Calu3 (cell line): ENCODE measurements at regions of chr3 and their contacts with region 1.

Region 1: DNA sequence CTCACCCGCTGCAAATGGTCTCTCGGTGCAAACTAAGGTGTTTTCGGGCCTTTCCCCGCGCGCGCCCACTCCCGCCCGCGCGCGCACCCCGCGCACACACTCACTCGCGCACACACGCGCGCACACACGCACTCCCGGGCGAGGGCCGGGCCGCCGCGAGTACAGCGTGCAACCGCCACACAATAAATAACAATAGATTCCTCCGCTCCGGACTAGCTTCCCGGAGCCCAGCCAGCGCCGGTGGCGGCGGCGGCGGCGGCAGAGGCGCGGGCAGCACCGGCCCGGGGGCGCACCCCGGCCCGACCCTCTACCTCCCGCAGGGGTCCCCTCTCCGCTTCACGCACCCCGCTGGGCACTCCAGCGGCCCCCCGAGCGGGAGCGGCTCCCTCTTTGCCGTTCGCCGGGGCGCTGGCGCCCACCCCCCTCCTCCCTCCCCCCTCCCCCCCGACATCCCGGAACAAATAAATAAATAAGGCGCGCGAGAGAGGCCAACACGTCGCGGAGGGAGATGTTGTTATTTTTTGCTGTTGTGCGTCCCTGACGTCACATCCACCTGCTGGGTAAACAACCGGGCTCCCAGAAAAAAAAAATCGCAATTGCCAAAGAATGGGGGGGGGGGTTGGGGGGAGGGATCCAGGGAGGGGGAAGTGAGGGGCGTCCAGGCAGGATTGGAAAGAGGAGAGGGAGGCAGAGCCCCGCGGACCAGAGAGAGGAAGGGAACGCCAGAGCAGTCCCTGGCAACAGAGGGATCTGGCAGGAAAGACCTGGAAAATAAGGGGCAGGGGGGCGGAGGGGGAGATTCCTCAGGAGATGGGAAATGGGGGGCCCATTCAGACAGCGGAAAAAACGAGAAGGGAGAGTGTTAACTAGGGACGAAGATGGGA is at the start of gene FOXP1:
- DNase-seq: peak; percentile 83
- H3K4me3 Mint-ChIP-seq: peak within 1 kb of the TSS; percentile 91
- H3K27ac Mint-ChIP-seq: peak within 1 kb of the TSS; percentile 97
- H3K4me1 Mint-ChIP-seq: no peaks in the 10 kb centered on the region
- H3K27me3 Mint-ChIP-seq: no peaks in the 10 kb centered on the region
- CTCF ChIP-seq: no peak
- total RNA-seq, gene FOXP1: 81.6 and 82.8 TPM in 2 replicates

Region 2: GRCh38 chr3:70531063-70531657 is 1052.6 kb before region 1 on chr3:
- CTCF ChIA-PET with region 1: no interaction called
- intact Hi-C with region 1: loop called (anchors 5 kb)
- DNase-seq: no peak
- H3K4me3 Mint-ChIP-seq: no peak overlapping the region
- H3K27ac Mint-ChIP-seq: no peak overlapping the region
- H3K4me1 Mint-ChIP-seq: no peaks in the 10 kb centered on the region
- H3K27me3 Mint-ChIP-seq: peaks cover 30% of the 10 kb centered on the region
- CTCF ChIP-seq: no peak

Region 3: GRCh38 chr3:70716832-70717231 is 867.0 kb before region 1 on chr3:
- CTCF ChIA-PET with region 1: interaction called, 3 read pairs
- intact Hi-C with region 1: loop called (anchors 1 kb)
- DNase-seq: no peak
- H3K4me3 Mint-ChIP-seq: no peak overlapping the region
- H3K27ac Mint-ChIP-seq: no peak overlapping the region
- H3K4me1 Mint-ChIP-seq: no peaks in the 10 kb centered on the region
- H3K27me3 Mint-ChIP-seq: no peaks in the 10 kb centered on the region
- CTCF ChIP-seq: no peak

Region 4: GRCh38 chr3:71064288-71064955 is 519.4 kb before region 1 on chr3:
- CTCF ChIA-PET with region 1: no interaction called
- intact Hi-C with region 1: loop called (anchors 2 kb)
- DNase-seq: peak; percentile 61
- H3K4me3 Mint-ChIP-seq: no peak overlapping the region
- H3K27ac Mint-ChIP-seq: no peak overlapping the region
- H3K4me1 Mint-ChIP-seq: peaks cover 29% of the 10 kb centered on the region
- H3K27me3 Mint-ChIP-seq: no peaks in the 10 kb centered on the region
- CTCF ChIP-seq: no peak

Region 5: DNA sequence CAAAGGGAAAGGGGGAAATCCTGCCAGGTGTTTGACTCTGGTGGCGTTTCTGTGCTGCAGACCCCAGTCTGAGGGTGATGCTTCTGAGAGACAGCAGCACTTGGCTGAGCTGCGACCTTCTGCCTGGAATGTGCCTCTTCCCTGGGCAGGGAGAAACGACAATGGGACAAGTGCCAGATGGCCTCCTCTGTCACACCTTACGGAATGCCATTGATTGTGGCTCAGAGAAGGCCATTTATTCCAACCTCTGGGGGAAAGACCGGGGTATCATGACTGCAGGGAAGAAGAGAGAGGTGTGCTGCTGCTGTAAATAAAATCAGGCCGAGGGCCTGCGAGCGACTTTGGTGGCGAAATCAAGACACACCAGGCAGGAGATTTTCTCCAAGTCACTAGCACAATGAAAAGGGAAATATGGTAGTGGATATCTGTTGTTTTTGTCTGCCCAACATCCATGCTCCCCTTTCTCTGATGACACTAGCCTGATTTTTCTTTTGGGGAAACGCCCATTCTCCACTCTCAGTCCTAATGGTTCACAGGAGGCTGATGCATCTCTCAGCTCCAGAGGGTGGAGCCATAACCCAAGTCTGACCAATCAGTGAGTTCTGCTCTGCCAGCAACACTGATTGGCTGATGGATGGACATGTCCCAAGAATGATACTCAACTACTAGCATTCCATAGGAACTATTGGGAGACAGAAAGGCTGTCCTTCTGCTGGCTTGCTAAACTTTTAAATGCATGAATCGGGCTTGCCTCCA is 336.4 kb before region 1 on chr3:
- CTCF ChIA-PET with region 1: no interaction called
- intact Hi-C with region 1: loop called (anchors 5 kb)
- DNase-seq: peak; percentile 58
- H3K4me3 Mint-ChIP-seq: peak overlapping the region; percentile 56
- H3K27ac Mint-ChIP-seq: peak overlapping the region; percentile 89
- H3K4me1 Mint-ChIP-seq: peaks cover 55% of the 10 kb centered on the region
- H3K27me3 Mint-ChIP-seq: no peaks in the 10 kb centered on the region
- CTCF ChIP-seq: no peak

Region 6: DNA sequence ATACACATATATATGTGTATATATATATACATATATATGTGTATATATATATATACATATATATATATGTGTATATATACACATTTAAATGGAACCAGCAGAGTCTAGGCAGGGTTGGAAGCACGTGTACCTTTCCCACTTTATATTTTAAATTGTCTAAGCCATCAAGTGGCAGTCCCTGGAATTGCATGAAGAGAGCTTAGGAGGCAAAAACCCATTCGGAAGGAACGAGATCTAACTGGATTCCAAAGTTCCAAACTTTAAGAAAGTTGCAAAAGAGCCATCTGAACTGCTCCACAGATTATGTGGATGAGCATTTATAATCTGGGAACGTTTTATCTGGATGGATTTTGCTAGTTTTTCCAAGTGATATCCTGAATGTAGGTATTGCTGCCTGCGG is 186.8 kb before region 1 on chr3:
- CTCF ChIA-PET with region 1: no interaction called
- intact Hi-C with region 1: loop called (anchors 5 kb)
- DNase-seq: peak; percentile 37
- H3K4me3 Mint-ChIP-seq: no peak overlapping the region
- H3K27ac Mint-ChIP-seq: no peak overlapping the region
- H3K4me1 Mint-ChIP-seq: peaks cover 29% of the 10 kb centered on the region
- H3K27me3 Mint-ChIP-seq: no peaks in the 10 kb centered on the region
- CTCF ChIP-seq: peak; percentile 22